ENCODE measurements at regions of chr4 and their contacts with region 1.

Region 1: DNA sequence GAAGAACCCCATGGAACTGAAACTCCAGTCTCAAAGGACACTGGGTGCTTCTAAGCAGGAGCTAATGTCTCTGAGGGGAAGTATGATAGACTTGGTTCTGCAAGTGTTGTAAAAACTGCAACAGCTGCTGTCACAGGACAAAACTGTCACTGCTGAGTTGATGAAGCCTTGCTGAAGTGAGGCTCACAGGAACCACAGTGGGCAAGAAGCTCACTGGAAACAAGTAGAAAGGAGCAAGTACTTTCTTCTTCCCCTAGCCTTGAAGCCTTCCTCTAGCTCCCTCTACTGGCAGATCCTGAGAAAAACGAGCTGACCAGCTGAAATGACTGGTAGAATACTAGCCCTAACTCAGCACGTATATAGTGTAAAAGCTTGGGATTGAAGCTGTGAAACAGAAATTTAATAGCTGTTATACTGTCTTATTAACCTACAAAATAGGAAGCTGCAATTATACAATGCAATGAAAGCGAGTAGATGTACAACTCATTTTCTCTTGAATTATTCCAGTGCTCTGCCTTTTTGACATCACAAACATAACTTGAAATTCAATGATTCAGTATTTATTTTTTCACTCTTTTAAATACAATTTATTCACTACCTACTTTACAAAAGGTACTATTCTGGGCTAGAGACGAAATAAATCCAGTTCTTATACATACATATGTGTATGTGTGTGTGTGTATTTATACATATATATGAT is 91.4 kb downstream of the GABRB1 start:
- DNase-seq: peak; percentile 68
- H3K4me3 ChIP-seq: no peak overlapping the region
- H3K27ac ChIP-seq: no peak overlapping the region
- H3K27me3 ChIP-seq: no peaks in the 10 kb centered on the region
- CTCF ChIP-seq: peak; percentile 95

Region 2: GRCh38 chr4:46931981-46932380 is 190.8 kb before region 1 on chr4:
- CTCF ChIA-PET with region 1: interaction called, 52 read pairs
- POLR2A ChIA-PET with region 1: no interaction called
- DNase-seq: no peak
- H3K4me3 ChIP-seq: no peak overlapping the region
- H3K27ac ChIP-seq: no peak overlapping the region
- H3K27me3 ChIP-seq: no peaks in the 10 kb centered on the region
- CTCF ChIP-seq: peak; percentile 86

Region 3: GRCh38 chr4:47032415-47033106 is 90.2 kb before region 1 on chr4:
- CTCF ChIA-PET with region 1: interaction called, 19 read pairs
- POLR2A ChIA-PET with region 1: no interaction called
- DNase-seq: peak; percentile 20
- H3K4me3 ChIP-seq: peak overlapping the region; percentile 68
- H3K27ac ChIP-seq: no peak overlapping the region
- H3K27me3 ChIP-seq: no peaks in the 10 kb centered on the region
- CTCF ChIP-seq: peak; percentile 84

Region 4: DNA sequence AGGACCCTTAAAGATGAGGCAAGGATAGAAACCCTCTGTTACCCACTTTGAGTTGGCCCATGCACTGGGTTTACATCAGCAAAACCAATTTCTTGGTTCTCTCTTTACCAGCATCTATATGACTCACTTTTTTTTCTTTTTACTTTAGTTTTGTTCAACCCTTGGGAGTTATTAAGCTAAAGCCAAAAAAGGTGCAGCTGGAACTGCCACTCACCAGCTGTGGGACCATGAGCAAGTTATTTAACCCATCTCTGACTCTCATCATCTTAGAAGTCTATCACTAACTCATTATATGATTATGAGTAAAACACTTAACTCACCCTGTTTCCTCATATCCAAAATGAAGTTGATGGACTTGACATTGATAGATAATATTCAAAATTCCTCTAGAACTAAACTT is 37.9 kb before region 1 on chr4:
- CTCF ChIA-PET with region 1: interaction called, 14 read pairs
- POLR2A ChIA-PET with region 1: no interaction called
- DNase-seq: no peak
- H3K4me3 ChIP-seq: no peak overlapping the region
- H3K27ac ChIP-seq: no peak overlapping the region
- H3K27me3 ChIP-seq: no peaks in the 10 kb centered on the region
- CTCF ChIP-seq: no peak

Region 5: DNA sequence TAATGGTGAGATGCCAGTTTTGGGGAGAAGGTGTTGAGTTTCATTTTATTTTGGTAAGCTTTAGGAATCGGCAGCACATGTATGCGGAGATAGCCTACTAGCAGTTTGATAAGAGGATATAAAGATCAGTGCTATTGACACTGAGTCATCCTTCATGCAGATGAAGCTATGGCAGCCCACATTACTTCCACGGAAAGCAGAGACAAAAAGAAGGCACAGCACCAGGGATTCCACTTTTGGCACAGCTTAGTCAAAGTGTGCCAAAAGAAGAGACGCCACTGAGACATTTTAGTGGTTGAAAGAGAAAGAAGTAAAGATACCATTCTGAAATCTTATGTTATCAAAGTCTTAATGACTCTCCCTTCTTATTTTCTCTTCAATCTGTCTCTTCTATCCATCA is 12.5 kb after region 1 on chr4:
- CTCF ChIA-PET with region 1: interaction called, 37 read pairs
- POLR2A ChIA-PET with region 1: no interaction called
- DNase-seq: no peak
- H3K4me3 ChIP-seq: no peak overlapping the region
- H3K27ac ChIP-seq: no peak overlapping the region
- H3K27me3 ChIP-seq: no peaks in the 10 kb centered on the region
- CTCF ChIP-seq: no peak

Region 6: DNA sequence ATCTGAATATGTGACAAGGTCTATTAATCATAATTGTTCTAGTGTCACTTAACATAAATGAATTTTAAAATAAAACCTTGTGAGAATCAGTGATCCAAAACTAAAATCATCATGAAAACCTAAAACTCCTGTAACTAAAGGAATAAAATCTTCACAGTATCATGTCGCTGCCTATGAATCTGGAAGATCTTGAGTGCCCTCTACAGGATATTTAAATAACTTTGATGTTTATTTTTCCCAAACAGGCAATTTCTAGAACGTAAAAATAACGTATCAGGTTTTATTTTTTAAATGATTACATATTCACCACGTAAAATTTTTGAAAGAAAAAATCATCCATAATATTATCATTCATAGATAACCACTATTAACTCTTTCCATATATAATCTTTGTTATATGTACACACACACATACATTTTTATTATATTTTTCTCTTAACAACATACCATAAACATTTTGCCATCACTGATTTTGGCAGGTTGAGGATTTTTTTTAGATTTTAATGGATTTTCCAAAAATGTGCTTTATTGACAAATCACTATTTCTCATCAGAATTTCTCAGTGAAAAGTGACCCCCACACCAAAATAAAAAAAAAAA is 261.2 kb after region 1 on chr4:
- CTCF ChIA-PET with region 1: interaction called, 37 read pairs
- POLR2A ChIA-PET with region 1: no interaction called
- DNase-seq: peak; percentile 21
- H3K4me3 ChIP-seq: no peak overlapping the region
- H3K27ac ChIP-seq: no peak overlapping the region
- H3K27me3 ChIP-seq: no peaks in the 10 kb centered on the region
- CTCF ChIP-seq: peak; percentile 56

Region 7: GRCh38 chr4:47410271-47410670 is 287.5 kb after region 1 on chr4:
- CTCF ChIA-PET with region 1: no interaction called
- POLR2A ChIA-PET with region 1: no interaction called
- DNase-seq: no peak
- H3K4me3 ChIP-seq: no peak overlapping the region
- H3K27ac ChIP-seq: no peak overlapping the region
- H3K27me3 ChIP-seq: no peaks in the 10 kb centered on the region
- CTCF ChIP-seq: no peak

Region 8: GRCh38 chr4:47686294-47686872 is 563.6 kb after region 1 on chr4:
- CTCF ChIA-PET with region 1: no interaction called
- POLR2A ChIA-PET with region 1: no interaction called
- DNase-seq: no peak
- H3K4me3 ChIP-seq: no peak overlapping the region
- H3K27ac ChIP-seq: no peak overlapping the region
- H3K27me3 ChIP-seq: no peaks in the 10 kb centered on the region
- CTCF ChIP-seq: peak; percentile 78